HCT116 (cell line): ENCODE measurements at regions of chr20 and their contacts with region 1.

Region 1: GRCh38 chr20:62616728-62617621 is 25.3 kb upstream of the SLCO4A1 start:
- DNase-seq: peak; percentile 43
- ATAC-seq: peak; percentile 99
- H3K4me3 ChIP-seq: no peak overlapping the region
- H3K27ac ChIP-seq: no peak overlapping the region
- H3K4me1 ChIP-seq: peaks cover 10 to 39% of the 10 kb centered on the region in 2 experiments; a peak in 3 of 4 replicates
- H3K27me3 ChIP-seq: no peaks in the 10 kb centered on the region
- CTCF ChIP-seq: peak in 2 of 3 experiments; percentile 96 to 99; a peak in 4 of 6 replicates
- POLR2A ChIP-seq: no peak
- RAD21 ChIP-seq: no peak

Region 2: DNA sequence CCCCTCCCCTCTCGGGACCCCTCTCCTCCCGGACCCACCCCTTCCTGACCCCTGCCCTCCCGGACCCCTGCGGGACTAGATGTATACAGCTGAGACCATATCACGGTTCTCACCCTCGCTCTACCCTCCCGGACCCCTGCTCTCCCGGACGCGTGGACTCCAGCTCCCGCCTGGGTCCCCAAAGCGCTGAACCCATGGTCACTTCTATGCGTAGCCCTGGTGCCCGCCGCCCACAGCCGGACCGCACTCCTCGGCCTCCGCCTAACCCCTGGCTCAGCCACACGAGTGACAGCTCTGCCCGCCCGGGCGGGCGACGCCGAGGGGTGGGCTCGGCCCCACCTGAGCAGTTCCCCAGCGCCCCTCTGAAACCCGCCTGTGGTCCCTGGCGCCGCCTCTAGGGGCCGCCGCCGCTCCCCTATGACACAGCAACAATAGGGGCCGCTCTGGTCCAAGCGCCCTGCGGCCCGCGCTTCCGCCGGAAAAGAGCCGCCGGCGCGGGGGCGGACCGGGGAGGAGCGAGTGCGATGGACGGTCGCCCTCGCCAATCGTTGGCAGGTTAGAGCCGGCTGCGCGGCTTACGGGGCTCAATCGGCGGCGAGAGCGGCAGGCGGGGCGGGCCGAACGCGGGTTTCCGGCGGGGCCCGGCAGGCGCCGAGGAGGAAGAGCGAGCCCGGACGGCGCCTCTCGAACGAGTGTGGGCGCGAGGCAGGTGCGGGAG is 314.5 kb before region 1 on chr20 and contains the start of gene ADRM1:
- CTCF ChIA-PET with region 1: no interaction called
- POLR2A ChIA-PET with region 1: no interaction called
- RAD21 ChIA-PET with region 1: no interaction called
- intact Hi-C with region 1: loop called (anchors 5 kb)
- DNase-seq: peak; percentile 88
- ATAC-seq: peak; percentile 78
- H3K4me3 ChIP-seq: peak within 1 kb of the TSS; percentile 95 to 99
- H3K27ac ChIP-seq: peak within 1 kb of the TSS; percentile 95
- H3K4me1 ChIP-seq: peaks cover 17 to 40% of the 10 kb centered on the region in 2 experiments
- H3K27me3 ChIP-seq: no peaks in the 10 kb centered on the region
- CTCF ChIP-seq: peak; percentile 77 to 95 (median 93)
- POLR2A ChIP-seq: peak; percentile 23
- RAD21 ChIP-seq: peak; percentile 66
- total RNA-seq, gene ADRM1: 158 TPM

Region 3: DNA sequence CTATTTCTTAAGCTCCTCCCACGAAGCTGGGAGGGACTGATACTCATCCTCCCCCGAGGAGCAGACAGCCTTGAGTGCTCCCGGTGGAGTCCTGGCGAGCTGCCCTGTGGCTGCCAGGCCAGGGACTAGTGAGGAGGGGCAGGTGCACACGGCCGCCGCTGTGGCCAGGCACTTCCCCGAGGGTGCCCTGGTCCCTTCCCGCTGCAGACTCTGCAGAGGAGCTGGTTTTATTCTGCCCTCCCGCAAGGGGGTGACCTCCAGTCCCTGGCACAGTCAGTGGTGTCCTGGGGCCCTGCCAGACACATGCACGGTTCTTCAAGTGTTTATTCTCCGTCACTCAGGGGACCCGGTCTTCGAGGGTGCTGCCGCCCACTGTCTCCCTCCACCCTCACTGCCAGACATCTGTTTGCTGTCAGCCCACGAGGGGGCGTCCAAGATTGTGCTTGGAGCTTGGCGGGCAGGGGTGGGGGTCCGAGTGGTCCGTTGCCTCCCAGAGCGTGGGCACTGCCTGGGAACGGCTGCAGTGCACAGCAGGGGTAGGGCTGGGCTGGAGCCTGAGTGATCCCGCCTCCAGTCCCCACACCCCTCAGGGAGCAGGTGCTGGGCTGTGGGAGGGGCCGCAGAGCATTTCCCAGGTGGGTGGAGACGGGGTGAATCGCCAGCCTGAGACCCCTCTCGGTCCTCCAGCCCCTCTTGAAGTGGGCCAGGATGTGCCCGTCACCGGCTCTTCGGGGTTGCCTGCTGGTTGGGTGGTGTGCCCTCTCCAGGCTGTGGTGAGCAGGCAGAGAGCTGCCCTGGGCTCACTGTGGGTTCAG is 206.8 kb before region 1 on chr20:
- CTCF ChIA-PET with region 1: interaction called, 20 read pairs
- POLR2A ChIA-PET with region 1: no interaction called
- RAD21 ChIA-PET with region 1: interaction called, 5 to 6 read pairs
- intact Hi-C with region 1: loop called (anchors 1 kb)
- DNase-seq: no peak
- ATAC-seq: peak; percentile 28
- H3K4me3 ChIP-seq: peak overlapping the region; percentile 7 to 41; a peak in 3 of 4 replicates
- H3K27ac ChIP-seq: peak overlapping the region; percentile 30; the same call in 1 of the 2 replicates
- H3K4me1 ChIP-seq: peaks cover 29 to 40% of the 10 kb centered on the region in 2 experiments
- H3K27me3 ChIP-seq: no peaks in the 10 kb centered on the region
- CTCF ChIP-seq: peak; percentile 78 to 95 (median 79)
- POLR2A ChIP-seq: no peak
- RAD21 ChIP-seq: peak; percentile 94

Region 4: DNA sequence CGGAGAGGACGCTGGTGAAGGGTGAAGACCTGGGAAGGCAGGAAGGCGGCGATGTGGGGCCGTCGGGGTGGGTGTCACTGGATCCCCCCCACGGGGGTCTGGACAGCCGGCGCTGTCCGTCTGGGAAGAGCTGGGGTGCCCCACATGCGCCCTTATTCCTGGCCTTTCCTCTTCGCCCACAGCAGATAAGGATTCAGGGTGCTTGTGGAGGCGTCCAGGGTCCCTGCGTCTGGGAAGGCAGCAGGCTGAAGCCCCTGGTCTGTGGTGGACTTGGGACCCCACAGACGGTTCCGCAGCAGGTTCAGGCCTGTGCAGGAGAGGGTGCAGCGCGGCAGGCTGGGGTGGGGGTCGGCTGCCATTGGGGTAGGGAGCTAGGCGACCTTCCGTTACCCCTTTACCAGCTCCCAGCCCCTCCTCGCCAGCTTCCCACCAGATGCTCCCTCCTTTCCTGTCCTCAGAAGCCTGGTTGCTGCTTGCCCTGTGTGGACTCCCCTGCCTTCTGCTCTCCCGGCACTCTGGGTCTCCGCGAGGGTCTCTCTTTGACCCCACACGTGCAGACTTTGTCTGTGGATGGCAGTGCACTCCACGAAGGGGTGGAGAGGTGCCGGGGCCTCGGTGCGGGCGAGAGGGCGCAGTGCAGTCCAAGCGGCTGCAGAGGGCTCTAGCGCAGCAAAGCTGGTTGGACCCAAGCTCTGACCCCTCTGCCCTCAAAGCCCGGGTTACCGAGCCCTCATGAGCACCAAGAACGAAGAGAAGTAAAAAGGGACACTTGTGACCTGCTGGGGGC is 139.1 kb before region 1 on chr20:
- CTCF ChIA-PET with region 1: interaction called, 11 read pairs
- POLR2A ChIA-PET with region 1: no interaction called
- RAD21 ChIA-PET with region 1: no interaction called
- intact Hi-C with region 1: no loop called
- DNase-seq: no peak
- ATAC-seq: peak; percentile 86
- H3K4me3 ChIP-seq: no peak overlapping the region
- H3K27ac ChIP-seq: no peak overlapping the region
- H3K4me1 ChIP-seq: no peaks in the 10 kb centered on the region
- H3K27me3 ChIP-seq: no peaks in the 10 kb centered on the region
- CTCF ChIP-seq: peak in 2 of 3 experiments; percentile 39 to 45; a peak in 4 of 6 replicates
- POLR2A ChIP-seq: no peak
- RAD21 ChIP-seq: peak; percentile 53; the same call in 1 of the 2 replicates

Region 5: DNA sequence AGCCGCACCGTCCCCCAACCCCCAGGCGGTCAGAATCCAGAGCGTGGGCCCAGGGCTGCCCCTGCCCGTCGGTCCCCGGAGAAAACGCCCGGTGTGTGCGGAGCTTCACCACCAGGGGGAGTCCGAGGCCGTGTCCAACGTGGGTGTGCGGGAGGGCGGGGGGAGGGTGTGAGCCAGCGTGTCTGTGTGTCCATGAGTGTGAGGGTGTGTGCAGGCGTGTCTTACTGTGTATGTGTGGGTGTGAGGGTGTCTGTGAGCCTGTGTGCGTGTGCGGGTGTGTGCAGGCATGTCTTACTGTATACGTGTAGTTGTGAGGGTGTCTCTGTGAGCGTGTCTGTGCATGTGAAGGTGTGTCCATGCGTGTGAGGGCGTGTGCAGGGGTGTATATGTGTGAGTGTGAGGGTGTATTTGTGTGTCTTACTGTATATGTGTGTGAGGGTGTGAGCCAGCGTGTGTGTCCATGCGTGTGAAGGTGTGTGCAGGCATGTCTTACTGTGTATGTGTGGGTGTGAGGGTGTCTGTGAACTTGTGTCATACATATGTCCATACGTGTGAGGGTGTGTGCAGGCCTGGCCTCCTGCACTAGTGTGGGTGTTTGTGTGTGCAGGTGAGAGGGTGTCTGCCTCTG is 116.6 kb before region 1 on chr20:
- CTCF ChIA-PET with region 1: interaction called, 28 read pairs
- POLR2A ChIA-PET with region 1: interaction called, 4 read pairs
- RAD21 ChIA-PET with region 1: interaction called, 6 to 11 read pairs
- intact Hi-C with region 1: loop called (anchors 1 kb)
- DNase-seq: peak; percentile 21
- ATAC-seq: peak; percentile 88
- H3K4me3 ChIP-seq: no peak overlapping the region
- H3K27ac ChIP-seq: peak overlapping the region; percentile 15; the same call in 1 of the 2 replicates
- H3K4me1 ChIP-seq: peaks cover 6 to 17% of the 10 kb centered on the region in 2 experiments; a peak in 3 of 4 replicates
- H3K27me3 ChIP-seq: no peaks in the 10 kb centered on the region
- CTCF ChIP-seq: peak; percentile 82 to 95 (median 90)
- POLR2A ChIP-seq: no peak
- RAD21 ChIP-seq: peak; percentile 96

Region 6: DNA sequence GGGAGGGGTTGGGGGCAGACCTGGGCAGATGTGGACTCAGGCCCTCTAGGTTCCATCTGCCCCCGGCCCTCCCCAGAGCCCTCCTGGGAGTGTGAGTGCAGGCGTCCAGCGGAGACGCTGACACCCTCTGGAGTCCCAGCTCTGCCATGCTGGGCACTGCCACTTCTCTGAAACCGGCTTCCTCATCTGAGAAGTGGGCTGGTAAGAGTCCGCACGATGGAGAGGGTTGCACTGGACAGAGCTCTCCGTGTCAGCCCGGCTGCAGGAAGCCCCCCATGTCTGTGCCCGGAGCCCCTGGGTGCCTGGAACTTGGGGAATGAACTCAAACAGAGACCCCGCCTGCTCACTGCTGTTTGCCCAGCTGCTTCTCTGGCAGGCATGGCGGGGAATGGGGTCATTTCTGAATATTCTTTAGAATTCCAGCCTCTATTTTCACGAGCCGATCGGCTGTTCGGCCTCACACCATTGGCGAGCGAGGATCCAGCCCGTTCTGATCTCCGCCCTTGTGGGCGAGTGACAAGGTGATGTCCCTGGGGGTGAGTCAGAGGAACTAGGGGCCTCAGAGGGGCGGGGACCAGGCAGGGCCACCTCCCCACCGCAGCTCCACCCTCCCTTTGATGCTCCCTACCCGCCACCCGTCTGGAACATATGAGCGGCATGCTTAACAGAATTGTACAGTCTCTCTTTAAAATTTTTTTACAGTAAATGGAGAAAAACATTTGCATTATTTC is 93.3 kb before region 1 on chr20:
- CTCF ChIA-PET with region 1: interaction called, 3 read pairs
- POLR2A ChIA-PET with region 1: no interaction called
- RAD21 ChIA-PET with region 1: no interaction called
- intact Hi-C with region 1: loop called (anchors 5 kb)
- DNase-seq: peak; percentile 49
- ATAC-seq: peak; percentile 98
- H3K4me3 ChIP-seq: peak overlapping the region in 1 of 2 experiments; percentile 40; a peak in 2 of 4 replicates
- H3K27ac ChIP-seq: no peak overlapping the region
- H3K4me1 ChIP-seq: peaks cover 11 to 19% of the 10 kb centered on the region in 2 experiments
- H3K27me3 ChIP-seq: no peaks in the 10 kb centered on the region
- CTCF ChIP-seq: no peak
- POLR2A ChIP-seq: no peak
- RAD21 ChIP-seq: no peak